Activated CD4-positive, alpha-beta T cell treated with anti-CD3 and anti-CD28 coated beads, Interleukin-2, amount 10 ng/mL, durations not matched to agents 24 days and 14 days (primary cell): ENCODE measurements at regions of chr15 and their contacts with region 1.

Region 1: GRCh38 chr15:74460871-74461846 is at the start of gene UBL7:
- DNase-seq: peak; percentile 99
- H3K4me3 Mint-ChIP-seq: peak within 1 kb of the TSS; percentile 94
- H3K27ac Mint-ChIP-seq: peak within 1 kb of the TSS; percentile 94
- H3K4me1 Mint-ChIP-seq: peaks cover 42% of the 10 kb centered on the region
- H3K27me3 Mint-ChIP-seq: no peaks in the 10 kb centered on the region
- total RNA-seq, gene UBL7: 53.5 and 62.1 TPM in 2 replicates

Region 2: DNA sequence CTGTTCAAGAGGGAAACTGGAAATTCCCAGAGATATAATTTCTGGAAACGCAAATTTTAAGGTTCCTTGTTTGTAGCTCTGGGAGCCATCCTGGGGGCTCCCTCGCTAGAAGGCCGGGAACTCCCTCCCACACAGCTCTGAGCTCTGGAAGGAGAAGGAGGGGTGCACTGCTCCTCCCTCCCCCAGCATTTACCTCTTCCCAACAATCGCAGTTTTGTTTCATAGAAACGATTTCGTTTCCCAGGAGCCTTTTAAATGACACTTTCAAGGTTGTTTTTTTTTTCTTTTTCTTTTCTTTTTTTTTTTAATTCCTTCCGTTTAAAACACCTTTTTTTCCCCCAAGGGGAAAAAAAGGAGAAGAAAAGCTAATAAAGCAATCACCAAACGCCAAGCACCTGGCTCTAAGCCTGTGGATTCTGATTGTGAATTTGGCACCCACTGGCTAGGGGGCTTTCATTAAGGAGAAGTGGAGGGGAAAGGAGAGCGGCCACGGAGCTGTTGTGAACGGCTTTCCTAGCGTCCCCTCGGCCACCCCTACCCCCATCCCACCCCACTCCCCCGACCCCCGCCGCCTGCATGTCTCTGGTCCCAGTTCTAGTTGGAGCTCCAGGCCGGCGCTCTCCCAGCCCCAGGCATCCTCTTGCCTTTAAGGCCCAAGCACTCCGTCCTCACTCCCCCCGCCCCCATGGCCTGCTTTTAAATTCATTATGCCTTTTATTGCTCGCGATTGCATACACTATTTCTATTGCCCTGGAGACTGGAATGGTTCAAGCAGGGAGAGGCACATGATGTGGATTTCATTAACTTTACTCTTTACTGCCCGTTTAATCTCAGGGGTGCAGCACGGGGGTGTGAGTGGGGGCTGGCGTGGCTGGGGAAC is 238.7 kb before region 1 on chr15:
- intact Hi-C with region 1: no loop called
- DNase-seq: no peak
- H3K4me3 Mint-ChIP-seq: no peak overlapping the region
- H3K27ac Mint-ChIP-seq: no peak overlapping the region
- H3K4me1 Mint-ChIP-seq: no peaks in the 10 kb centered on the region
- H3K27me3 Mint-ChIP-seq: peaks cover 34% of the 10 kb centered on the region

Region 3: DNA sequence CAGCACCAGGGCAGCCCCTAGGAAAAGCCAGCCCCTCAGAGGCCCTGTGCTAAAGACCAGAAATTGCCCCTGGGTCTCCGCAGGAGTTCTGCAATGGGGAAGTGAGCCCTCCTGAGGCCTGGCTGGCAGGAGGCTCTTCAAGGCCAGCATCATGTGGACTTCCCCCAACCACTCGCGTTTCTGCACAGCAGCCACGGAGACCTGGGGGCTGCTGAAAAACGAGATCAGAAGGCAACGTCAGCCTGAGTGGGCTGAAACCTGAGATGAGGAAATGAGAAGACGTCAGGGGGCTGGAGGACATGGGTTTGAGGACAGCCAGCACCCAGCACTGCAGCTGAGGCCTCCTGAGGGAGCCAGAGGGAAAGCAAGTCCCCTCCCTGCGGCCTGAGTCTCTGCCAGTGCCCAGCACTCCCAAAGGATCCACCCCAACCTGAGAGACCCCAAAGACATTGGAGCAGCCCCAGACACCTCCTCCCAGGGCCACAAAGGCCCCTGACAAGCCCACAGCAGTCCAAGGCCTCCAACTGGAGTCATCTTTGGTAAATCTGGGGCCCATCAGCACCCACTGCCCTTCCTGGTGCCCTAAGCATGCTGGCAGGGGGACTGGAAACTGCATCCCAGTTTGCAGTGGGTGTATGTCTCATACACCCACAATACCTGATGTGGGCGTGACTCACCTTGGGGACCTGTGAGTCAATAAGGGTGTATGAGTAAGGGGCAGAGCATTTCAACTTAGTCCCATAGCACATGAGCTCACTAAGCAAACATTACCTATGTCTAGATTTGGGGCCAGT is 64.5 kb before region 1 on chr15:
- intact Hi-C with region 1: loop called (anchors 2 kb)
- DNase-seq: no peak
- H3K4me3 Mint-ChIP-seq: peak overlapping the region; percentile 66
- H3K27ac Mint-ChIP-seq: peak overlapping the region; percentile 97
- H3K4me1 Mint-ChIP-seq: peaks cover 90% of the 10 kb centered on the region
- H3K27me3 Mint-ChIP-seq: no peaks in the 10 kb centered on the region

Region 4: DNA sequence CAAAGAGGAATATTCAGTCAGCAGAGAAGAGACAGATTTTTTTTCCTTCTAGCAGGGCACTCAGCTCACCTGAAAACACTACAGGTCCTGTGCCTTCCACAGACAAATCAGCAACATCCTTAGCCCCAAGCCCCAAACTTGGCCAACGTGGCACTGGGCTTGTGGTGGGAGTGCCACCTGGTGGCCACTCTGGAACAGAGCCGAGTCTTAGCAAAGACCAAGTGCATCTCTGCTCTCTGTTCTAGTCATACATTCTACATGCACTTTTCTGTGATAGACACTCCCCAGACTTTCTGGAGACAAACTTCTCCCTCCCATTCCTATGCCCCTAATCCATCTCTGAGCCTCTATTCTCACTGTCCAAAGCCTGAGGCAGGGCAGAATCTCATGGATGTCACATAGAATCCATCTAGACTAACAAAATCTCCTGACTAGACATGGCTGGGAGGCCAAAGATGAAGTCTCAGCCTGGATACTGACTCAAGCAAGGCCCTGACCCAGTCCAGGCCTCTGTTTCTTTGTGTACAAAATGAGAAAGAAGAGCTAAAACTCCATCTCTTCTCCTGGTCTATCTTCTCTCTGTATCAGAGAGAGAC is 22.3 kb before region 1 on chr15:
- intact Hi-C with region 1: loop called (anchors 2 kb)
- DNase-seq: peak; percentile 94
- H3K4me3 Mint-ChIP-seq: no peak overlapping the region
- H3K27ac Mint-ChIP-seq: no peak overlapping the region
- H3K4me1 Mint-ChIP-seq: peaks cover 52% of the 10 kb centered on the region
- H3K27me3 Mint-ChIP-seq: no peaks in the 10 kb centered on the region

Region 5: GRCh38 chr15:74489518-74490338 is 28.6 kb after region 1 on chr15:
- intact Hi-C with region 1: loop called (anchors 2 kb)
- DNase-seq: peak; percentile 91
- H3K4me3 Mint-ChIP-seq: peak overlapping the region; percentile 6
- H3K27ac Mint-ChIP-seq: no peak overlapping the region
- H3K4me1 Mint-ChIP-seq: peaks cover 16% of the 10 kb centered on the region
- H3K27me3 Mint-ChIP-seq: no peaks in the 10 kb centered on the region

Region 6: GRCh38 chr15:74615508-74616365 is 154.6 kb after region 1 on chr15 and contains the start of gene CLK3:
- intact Hi-C with region 1: loop called (anchors 2 kb)
- DNase-seq: peak; percentile 99
- H3K4me3 Mint-ChIP-seq: peak within 1 kb of the TSS; percentile 95
- H3K27ac Mint-ChIP-seq: peak within 1 kb of the TSS; percentile 97
- H3K4me1 Mint-ChIP-seq: peaks cover 41% of the 10 kb centered on the region
- H3K27me3 Mint-ChIP-seq: no peaks in the 10 kb centered on the region
- total RNA-seq, gene CLK3: 112 and 113 TPM in 2 replicates